Sciatic nerve (tissue), 2 donors: ENCODE measurements at regions of chr6 and their contacts with region 1.

Region 1: GRCh38 chr6:118968416-118968815 is 33.5 kb upstream of the MCM9 start:
- DNase-seq: no peak
- ATAC-seq: peak; percentile 64

Region 2: DNA sequence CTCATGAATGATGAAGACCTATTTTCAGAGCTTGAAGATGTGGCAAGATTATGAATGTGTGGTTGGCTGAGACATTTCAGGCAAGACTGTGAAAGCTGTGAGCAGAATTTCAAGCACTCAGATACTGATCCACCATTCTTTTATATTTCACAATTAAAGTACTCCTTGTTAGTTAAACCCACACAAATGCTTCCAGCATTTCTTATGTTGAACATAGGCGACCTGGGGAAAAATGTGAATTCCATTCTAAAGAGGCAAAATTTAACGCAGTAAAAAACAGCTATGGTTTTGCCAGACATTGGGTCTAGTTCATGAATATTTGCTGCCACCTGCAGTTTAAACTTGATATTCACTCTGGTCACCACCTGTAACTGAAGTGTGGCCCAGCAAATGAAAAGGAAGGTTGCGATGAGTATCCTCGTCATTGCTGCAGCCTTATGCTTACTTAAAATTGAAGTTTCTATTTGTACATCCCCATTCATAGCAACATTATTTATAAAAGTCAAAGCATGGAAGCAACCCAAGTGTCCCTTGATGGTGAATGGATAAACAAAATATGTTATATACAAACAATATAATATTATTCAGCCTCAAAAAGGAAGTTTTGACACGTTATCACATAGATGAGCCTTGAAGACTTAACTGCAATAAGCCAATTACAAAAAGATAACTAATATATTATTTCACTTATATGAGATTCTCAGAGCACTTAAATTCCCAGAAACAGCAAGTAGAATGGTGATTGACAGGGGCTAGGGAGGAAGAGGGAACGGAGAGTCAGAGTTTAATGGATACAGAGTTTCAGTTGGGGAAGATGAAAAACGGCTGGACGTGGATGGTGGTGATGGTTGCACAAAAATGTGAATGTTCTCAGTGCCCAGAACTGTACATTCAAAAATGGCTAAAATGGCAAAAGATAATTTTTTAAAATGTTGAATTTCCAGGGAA is 142.5 kb after region 1 on chr6:
- intact Hi-C with region 1: loop called (anchors 5 kb)
- DNase-seq: no peak
- ATAC-seq: peak; percentile 92